ENCODE measurements at regions of chr9 and their contacts with region 1.

Region 1: DNA sequence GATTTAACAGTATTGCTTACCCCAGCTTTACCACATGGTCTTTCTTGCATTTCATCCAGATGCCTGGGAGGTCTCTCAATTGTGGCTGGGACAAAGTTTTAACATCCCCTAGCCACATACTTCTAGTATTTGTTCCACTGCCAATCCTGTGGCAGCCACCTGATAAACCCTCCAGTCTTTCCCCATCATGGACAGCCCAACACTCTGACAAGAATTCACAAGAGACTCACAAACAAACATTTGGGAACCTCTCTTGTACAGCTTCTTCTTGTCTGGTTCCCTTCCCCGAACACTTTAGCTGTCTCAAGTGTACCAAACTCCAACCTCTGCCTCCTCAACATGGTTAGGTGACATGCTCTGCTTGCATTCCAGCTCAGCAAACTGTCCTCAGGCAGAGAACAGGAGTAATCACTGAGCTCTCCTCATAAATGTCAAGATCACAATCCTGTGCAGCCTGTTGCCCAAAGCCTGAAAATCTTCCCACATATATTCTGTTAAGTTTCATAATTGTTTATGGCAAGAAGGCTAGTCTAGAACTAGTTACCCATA is 59.7 kb downstream of the STRBP start:
- DNase-seq: no peak
- H3K4me3 ChIP-seq: no peak overlapping the region
- H3K27ac ChIP-seq: peak overlapping the region in 1 of 4 donors; percentile 37
- H3K4me1 ChIP-seq: peaks cover 0 to 15% (median 9%) of the 10 kb centered on the region in 4 donors
- H3K27me3 ChIP-seq: no peaks in the 10 kb centered on the region
- CTCF ChIP-seq: no peak
- EP300 ChIP-seq: no peak
- POLR2A ChIP-seq: no peak

Region 2: DNA sequence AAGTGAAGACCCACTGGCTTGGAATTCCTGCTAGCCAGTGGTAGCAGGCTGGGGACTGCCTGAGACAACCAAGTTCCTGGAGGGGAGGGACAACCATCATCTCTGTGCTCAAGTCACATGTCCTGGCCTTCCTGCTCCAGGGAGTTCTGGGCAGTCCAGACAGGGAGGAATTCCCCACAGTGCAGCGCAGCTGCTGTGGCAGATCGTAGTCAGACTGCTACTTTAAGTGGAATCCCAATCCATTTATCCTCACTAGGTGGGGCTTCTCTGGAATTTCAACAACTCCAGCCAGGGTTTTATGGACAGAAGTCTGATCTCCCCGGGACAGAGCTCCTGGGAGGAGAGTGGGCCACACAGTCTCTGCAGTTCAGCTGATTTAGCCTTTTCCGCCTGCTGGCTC is 440.9 kb before region 1 on chr9:
- intact Hi-C with region 1: no loop called
- DNase-seq: no peak
- H3K4me3 ChIP-seq: no peak overlapping the region
- H3K27ac ChIP-seq: no peak overlapping the region
- H3K4me1 ChIP-seq: no peaks in the 10 kb centered on the region
- H3K27me3 ChIP-seq: no peaks in the 10 kb centered on the region
- CTCF ChIP-seq: no peak
- EP300 ChIP-seq: no peak
- POLR2A ChIP-seq: no peak

Region 3: GRCh38 chr9:123049589-123050222 is 159.0 kb before region 1 on chr9:
- intact Hi-C with region 1: no loop called
- DNase-seq: peak; percentile 62
- H3K4me3 ChIP-seq: no peak overlapping the region
- H3K27ac ChIP-seq: peak overlapping the region; percentile 68 to 70 (median 68)
- H3K4me1 ChIP-seq: peaks cover 0 to 82% (median 61%) of the 10 kb centered on the region in 4 donors
- H3K27me3 ChIP-seq: no peaks in the 10 kb centered on the region
- CTCF ChIP-seq: no peak
- EP300 ChIP-seq: no peak
- POLR2A ChIP-seq: no peak

Region 4: GRCh38 chr9:123149067-123149466 is 59.6 kb before region 1 on chr9:
- intact Hi-C with region 1: loop called (anchors 10 kb)
- DNase-seq: no peak
- H3K4me3 ChIP-seq: no peak overlapping the region
- H3K27ac ChIP-seq: no peak overlapping the region
- H3K4me1 ChIP-seq: no peaks in the 10 kb centered on the region
- H3K27me3 ChIP-seq: no peaks in the 10 kb centered on the region
- CTCF ChIP-seq: no peak
- EP300 ChIP-seq: no peak
- POLR2A ChIP-seq: no peak